ENCODE measurements at regions of chr11 and their contacts with region 1.

Region 1: GRCh38 chr11:76318744-76319384 is 62.1 kb downstream of the THAP12 start:
- DNase-seq: peak; percentile 59 to 97 (median 83)

Region 2: DNA sequence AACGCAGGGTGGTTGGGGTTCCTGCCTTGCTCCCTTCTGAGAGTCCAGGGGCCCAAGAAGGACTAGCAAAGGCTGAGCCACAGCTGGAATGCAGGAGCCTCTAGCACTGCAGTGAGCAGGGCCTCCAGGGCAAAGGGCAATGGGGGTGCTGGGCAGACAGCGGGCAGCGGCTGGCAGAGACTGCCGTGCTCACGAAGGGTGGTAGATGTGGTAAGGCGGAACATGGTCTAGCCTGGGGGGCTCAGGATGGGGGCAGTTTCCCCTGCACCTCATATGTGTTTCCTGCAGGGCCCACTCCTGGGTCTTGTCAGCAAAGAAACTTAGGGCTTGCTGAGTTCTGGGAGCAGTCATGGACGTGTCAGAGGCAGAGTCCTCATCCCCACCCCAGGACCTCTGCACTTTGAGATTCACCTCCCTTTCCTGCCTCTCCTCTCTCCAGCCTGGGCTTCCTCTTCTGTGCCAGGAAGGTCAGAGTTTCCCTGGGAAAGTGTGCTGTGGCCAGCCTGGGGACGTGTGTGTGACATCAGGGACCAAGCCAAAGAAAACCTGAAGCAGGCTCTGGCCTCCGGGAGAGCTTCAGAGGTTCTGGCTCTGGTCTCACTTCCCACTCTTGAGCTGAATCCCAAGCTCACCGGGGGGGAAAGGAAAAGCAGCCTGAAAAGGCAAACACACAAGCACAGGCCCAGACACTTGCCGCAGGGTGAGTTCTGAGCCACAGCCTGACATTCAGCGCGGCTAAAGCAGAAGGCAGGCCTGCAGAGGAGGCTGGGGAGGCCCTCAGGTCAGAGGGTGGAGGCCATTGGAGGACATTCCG is 596.8 kb before region 1 on chr11:
- intact Hi-C with region 1: loop called (anchors 5 kb)
- DNase-seq: no peak

Region 3: GRCh38 chr11:75802913-75803820 is 515.7 kb before region 1 on chr11:
- intact Hi-C with region 1: loop called (anchors 5 kb)
- DNase-seq: peak in 9 of 10 donors; percentile 38 to 93 (median 83)

Region 4: DNA sequence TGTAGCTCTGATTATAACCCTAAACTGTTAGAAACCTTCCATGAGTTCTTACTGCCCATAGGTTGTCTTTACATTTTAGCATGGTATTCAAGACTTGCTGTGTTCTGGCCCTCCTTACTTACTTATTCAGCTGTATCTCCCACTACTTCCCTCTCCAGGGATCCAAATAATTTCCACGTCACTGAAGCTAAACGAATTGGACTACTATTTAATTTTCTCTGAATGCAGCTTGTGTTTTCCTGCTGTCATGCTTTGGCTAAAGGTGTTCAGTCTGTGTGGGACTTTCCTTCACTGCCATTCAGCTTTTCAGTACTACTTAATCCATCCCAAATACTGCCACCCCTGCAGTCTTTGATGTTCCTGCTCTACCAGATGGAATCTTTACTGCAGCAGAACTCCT is 415.6 kb before region 1 on chr11:
- intact Hi-C with region 1: loop called (anchors 5 kb)
- DNase-seq: no peak

Region 5: DNA sequence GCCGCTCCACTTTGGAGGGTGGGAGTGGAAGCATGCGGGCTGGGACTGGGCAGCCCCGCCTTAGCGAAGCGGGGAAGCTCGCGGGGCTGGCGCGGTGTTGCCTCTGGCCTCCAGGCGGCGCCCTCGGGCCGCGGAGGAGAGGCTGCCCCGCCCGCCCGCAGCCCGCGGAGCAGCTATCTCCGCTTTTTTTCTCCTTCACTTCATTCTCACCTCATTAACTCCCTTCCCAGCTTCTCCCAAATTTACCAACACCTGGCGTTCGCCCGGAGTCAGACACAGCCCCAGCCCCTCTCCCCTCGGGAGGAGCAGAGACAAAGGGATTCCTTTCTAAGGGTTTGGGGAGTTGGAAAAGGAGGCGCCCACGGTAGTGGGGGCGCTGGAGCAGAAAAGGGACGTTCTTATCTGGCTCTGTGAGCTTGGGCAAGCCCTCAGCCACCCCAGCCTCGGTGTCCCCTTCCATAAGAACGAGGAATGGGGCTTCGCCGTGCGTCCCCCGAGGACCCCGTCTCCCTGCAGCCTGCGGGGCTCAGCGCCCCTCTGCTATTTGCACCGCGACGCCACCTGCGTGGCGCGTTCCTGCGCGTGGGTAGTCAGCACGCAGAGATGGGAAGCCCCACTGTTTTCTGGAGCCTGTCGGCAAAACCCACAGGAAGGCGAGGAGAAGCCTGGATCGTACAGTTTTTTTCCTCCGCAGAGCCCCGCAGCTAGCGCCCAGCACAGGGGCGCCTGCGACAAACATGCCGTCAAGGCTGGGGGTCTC is 111.0 kb before region 1 on chr11:
- intact Hi-C with region 1: loop called (anchors 1 kb)
- DNase-seq: peak; percentile 43 to 96 (median 71)